ENCODE measurements at regions of chr1 and their contacts with region 1.

Region 1: GRCh38 chr1:151340870-151341754 is 5.9 kb downstream of the RFX5 start:
- DNase-seq: peak; percentile 67
- H3K4me3 ChIP-seq: no peak overlapping the region; a peak in 1 of 4 replicates
- H3K27ac ChIP-seq: peak overlapping the region; percentile 58 to 70
- H3K4me1 ChIP-seq: peaks cover 6 to 7% of the 10 kb centered on the region in 2 experiments; a peak in 2 of 4 replicates
- H3K27me3 ChIP-seq: no peaks in the 10 kb centered on the region
- CTCF ChIP-seq: peak; percentile 77
- EP300 ChIP-seq: no peak
- RAD21 ChIP-seq: peak; percentile 90

Region 2: DNA sequence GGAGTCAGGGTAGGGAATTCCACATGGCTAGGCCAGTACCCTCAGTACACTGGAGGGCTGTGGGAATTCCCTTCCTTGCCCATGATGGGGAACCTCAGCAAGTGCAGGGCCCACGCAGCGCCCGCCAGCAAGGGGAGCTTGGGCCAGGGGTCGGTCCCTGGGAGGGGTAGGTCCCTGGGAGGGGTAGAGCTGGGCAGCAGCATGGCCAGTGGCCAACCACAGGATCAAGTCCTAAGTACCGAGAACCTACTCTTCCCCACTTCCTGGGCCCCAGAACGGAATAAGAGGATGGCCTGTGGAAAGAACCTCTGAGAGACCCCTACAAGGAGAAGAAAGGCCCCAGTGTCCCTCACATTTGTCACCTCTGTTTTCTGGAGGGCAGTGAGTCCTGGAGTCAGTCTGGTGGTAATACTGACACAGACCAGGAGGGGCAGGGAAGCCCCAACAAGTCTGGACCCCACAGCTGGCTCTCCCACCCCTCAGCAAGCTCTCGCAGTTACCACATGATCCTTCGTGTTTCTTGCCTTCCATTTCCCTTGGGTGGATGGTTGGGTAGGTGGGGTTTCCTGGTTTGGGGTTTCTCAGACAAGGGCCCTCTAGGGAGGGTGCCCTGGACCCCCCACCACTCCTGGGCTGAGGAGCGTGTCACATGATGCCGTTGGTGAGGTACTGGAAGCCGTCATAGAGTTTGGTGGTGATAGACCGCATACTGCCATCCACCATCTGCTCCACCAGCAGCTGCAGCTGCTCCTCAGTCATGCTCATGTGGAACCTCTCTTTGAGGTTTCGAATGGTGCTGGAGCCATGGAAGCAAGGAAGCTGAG is 48.7 kb before region 1 on chr1:
- CTCF ChIA-PET with region 1: interaction called, 87 read pairs
- POLR2A ChIA-PET with region 1: no interaction called
- DNase-seq: peak; percentile 45
- H3K4me3 ChIP-seq: no peak overlapping the region
- H3K27ac ChIP-seq: no peak overlapping the region
- H3K4me1 ChIP-seq: no peaks in the 10 kb centered on the region
- H3K27me3 ChIP-seq: no peaks in the 10 kb centered on the region
- CTCF ChIP-seq: no peak
- EP300 ChIP-seq: no peak
- RAD21 ChIP-seq: no peak

Region 3: DNA sequence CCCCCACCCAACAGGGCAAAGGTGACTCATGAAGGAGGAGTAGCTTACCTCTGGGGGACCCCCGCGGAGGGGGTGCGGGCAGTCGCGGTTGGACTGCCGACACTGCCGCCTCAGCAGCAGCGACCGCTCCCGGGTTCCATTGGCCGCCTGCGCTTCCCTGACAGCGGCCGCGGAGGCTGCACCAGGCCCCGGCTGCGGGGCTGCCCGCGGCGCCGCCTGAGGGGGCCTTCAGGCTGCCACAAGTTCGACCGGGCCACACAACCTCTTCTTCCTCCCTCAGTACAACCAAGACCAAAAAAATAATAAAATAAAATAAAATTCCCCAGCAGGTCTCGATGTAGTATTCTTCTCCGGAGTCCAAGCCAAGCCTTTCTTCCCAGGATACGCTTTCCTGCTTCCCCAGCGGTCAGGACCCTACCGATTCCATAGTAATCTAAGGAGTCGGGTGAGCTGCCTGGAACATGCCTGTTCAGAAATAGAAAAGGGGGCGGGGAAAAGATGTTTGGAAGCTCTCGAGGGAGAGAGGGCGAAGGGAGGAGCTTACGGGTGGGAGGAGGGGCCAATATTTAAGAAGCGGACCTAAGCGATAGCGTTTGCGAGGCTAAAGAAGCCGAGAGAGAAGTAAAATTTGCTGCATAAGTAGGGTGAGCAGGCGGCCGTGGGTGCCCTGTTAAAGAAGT is 13.7 kb before region 1 on chr1 and contains the start of gene PI4KB:
- CTCF ChIA-PET with region 1: interaction called, 142 read pairs
- POLR2A ChIA-PET with region 1: interaction called, 6 read pairs
- DNase-seq: peak; percentile 96
- H3K4me3 ChIP-seq: peak within 1 kb of the TSS; percentile 65 to 68
- H3K27ac ChIP-seq: peak within 1 kb of the TSS; percentile 92
- H3K4me1 ChIP-seq: peaks cover 5 to 12% of the 10 kb centered on the region in 2 experiments; a peak in 3 of 4 replicates
- H3K27me3 ChIP-seq: no peaks in the 10 kb centered on the region
- CTCF ChIP-seq: no peak
- EP300 ChIP-seq: no peak
- RAD21 ChIP-seq: no peak
- polyA plus RNA-seq, gene PI4KB: 62.9 and 76.6 TPM in 2 replicates

Region 4: DNA sequence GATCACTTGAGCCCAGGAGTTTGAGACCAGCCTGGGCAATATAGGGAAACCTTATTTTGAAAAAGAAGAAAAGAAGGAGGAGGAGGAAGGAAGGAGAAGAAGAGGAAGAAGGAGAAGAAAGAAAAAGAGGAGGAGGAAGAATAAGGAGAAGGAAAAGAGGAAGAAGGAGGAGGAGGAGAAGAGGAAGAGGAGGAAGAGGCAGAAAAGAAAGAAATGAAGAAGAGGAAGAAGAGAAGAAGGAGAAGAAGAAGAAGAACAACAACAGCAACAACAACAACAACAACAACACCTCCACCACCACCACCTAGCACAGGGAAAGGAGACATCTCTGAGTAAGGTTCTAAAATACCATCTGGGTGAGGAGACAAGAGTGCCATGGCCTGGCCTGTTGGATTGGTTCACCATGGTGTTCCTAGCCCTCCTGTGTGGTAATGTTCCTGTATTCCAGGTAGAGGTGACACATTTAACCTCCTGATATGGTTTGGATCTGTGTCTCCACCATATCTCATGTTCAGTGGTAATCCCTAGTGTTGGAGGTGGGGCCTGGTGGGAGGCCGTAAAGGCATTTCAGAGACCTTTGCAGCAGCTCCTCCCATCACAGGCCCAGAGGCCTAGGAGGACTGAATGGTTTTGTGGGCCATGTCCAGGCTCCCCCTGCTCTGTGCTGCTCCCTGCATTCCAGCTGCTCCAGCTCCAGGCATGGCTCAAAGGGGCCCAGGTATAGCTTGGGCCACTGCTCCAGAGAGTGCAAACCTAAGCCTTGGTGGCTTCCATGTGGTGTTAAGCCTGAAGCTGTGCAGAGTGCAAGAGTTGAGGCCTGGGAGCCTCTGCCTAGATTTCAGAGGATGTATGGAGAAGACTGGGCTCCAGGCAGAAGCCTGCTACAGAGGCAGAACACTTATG is 21.1 kb after region 1 on chr1:
- CTCF ChIA-PET with region 1: interaction called, 10 read pairs
- POLR2A ChIA-PET with region 1: no interaction called
- DNase-seq: no peak
- H3K4me3 ChIP-seq: no peak overlapping the region
- H3K27ac ChIP-seq: no peak overlapping the region
- H3K4me1 ChIP-seq: no peaks in the 10 kb centered on the region
- H3K27me3 ChIP-seq: no peaks in the 10 kb centered on the region
- CTCF ChIP-seq: no peak
- EP300 ChIP-seq: no peak
- RAD21 ChIP-seq: no peak

Region 5: DNA sequence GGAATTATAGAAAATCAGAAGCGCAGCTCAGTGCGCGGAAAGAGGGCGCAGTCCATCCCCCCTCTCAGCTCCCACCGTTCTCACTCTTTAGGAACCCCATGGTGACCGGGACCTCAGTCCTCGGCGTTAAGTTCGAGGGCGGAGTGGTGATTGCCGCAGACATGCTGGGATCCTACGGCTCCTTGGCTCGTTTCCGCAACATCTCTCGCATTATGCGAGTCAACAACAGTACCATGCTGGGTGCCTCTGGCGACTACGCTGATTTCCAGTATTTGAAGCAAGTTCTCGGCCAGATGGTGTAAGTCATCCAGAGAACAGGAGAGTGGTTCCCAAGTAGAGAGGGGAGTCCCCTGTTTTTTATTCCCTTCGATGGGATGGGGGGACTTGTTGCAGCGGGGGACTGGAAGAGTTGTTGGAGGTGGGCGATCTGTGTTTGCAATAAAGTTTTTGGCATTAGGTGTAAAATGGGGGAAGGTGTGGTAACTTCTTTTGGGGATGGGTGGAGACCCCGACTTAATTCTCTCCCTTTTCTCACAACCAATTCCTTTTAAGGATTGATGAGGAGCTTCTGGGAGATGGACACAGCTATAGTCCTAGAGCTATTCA is 58.9 kb after region 1 on chr1:
- CTCF ChIA-PET with region 1: interaction called, 18 read pairs
- POLR2A ChIA-PET with region 1: no interaction called
- DNase-seq: no peak
- H3K4me3 ChIP-seq: peak overlapping the region; percentile 84 to 90
- H3K27ac ChIP-seq: peak overlapping the region; percentile 82 to 83
- H3K4me1 ChIP-seq: peaks cover 11 to 12% of the 10 kb centered on the region in 2 experiments; a peak in 3 of 4 replicates
- H3K27me3 ChIP-seq: no peaks in the 10 kb centered on the region
- CTCF ChIP-seq: no peak
- EP300 ChIP-seq: no peak
- RAD21 ChIP-seq: no peak

Measured in SK-N-SH (cell line).